Natural killer cell (primary cell): ENCODE measurements at regions of chr15 and their contacts with region 1.

Region 1: DNA sequence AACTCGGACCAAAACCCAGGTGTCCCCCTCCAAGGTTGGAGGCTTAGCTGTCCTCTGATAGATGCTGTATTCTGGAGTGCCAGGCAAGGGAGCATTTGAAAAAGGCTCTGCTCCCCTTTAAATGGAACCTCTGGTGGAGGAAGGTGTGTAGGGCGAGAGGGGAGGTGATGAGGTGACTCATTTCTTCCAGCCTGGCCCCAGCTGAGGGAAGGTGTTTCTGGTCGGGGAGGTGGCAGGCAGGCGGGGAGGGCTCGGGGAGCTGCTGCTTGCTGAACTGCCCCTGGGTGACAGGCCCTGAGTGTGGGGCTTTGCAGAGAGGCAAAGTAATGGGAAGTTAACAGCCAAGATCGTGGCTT is 18.8 kb downstream of the PSTPIP1 start:
- DNase-seq: peak; percentile 78 to 88
- ATAC-seq: peak; percentile 68 to 80 (median 73)
- H3K4me3 ChIP-seq: peak overlapping the region; percentile 5
- H3K4me3 Mint-ChIP-seq: peak overlapping the region; percentile 90
- H3K27ac ChIP-seq: peak overlapping the region; percentile 84
- H3K27ac Mint-ChIP-seq: peak overlapping the region; percentile 96 to 99
- H3K4me1 ChIP-seq: peaks cover 99% of the 10 kb centered on the region
- H3K4me1 Mint-ChIP-seq: peaks cover 74 to 98% of the 10 kb centered on the region in 2 donors
- H3K27me3 ChIP-seq: no peaks in the 10 kb centered on the region
- H3K27me3 Mint-ChIP-seq: no peaks in the 10 kb centered on the region
- CTCF ChIP-seq: no peak

Region 2: GRCh38 chr15:76931397-76932007 is 82.3 kb before region 1 on chr15 and contains the start of gene RCN2:
- intact Hi-C with region 1: loop called (anchors 5 kb)
- DNase-seq: peak; percentile 96 to 97
- ATAC-seq: peak; percentile 96 to 100 (median 98)
- H3K4me3 ChIP-seq: peak within 1 kb of the TSS; percentile 62
- H3K4me3 Mint-ChIP-seq: peak within 1 kb of the TSS; percentile 91
- H3K27ac ChIP-seq: peak within 1 kb of the TSS; percentile 72
- H3K27ac Mint-ChIP-seq: peak within 1 kb of the TSS; percentile 86
- H3K4me1 ChIP-seq: peaks cover 5% of the 10 kb centered on the region
- H3K4me1 Mint-ChIP-seq: peaks cover 20 to 29% of the 10 kb centered on the region in 2 donors
- H3K27me3 ChIP-seq: no peaks in the 10 kb centered on the region
- H3K27me3 Mint-ChIP-seq: peaks cover 0 to 2% of the 10 kb centered on the region in 2 donors
- CTCF ChIP-seq: no peak
- total RNA-seq, gene RCN2: 24.1 to 30.0 (median 25.0) TPM

Region 3: GRCh38 chr15:76996526-76997401 is 17.0 kb before region 1 on chr15:
- intact Hi-C with region 1: loop called (anchors 2 kb)
- DNase-seq: peak in 1 of 2 donors; percentile 69
- ATAC-seq: peak; percentile 31 to 50 (median 40)
- H3K4me3 ChIP-seq: peak overlapping the region; percentile 81
- H3K4me3 Mint-ChIP-seq: peak overlapping the region; percentile 96
- H3K27ac ChIP-seq: peak overlapping the region; percentile 86
- H3K27ac Mint-ChIP-seq: peak overlapping the region; percentile 92 to 95
- H3K4me1 ChIP-seq: peaks cover 93% of the 10 kb centered on the region
- H3K4me1 Mint-ChIP-seq: peaks cover 72 to 88% of the 10 kb centered on the region in 2 donors
- H3K27me3 ChIP-seq: no peaks in the 10 kb centered on the region
- H3K27me3 Mint-ChIP-seq: no peaks in the 10 kb centered on the region
- CTCF ChIP-seq: no peak

Region 4: GRCh38 chr15:77002954-77003912 is 10.5 kb before region 1 on chr15:
- intact Hi-C with region 1: loop called (anchors 1 kb)
- DNase-seq: peak; percentile 44 to 87
- ATAC-seq: peak; percentile 51 to 82 (median 78)
- H3K4me3 ChIP-seq: no peak overlapping the region
- H3K4me3 Mint-ChIP-seq: peak overlapping the region; percentile 82
- H3K27ac ChIP-seq: peak overlapping the region; percentile 83
- H3K27ac Mint-ChIP-seq: peak overlapping the region; percentile 92 to 95
- H3K4me1 ChIP-seq: peaks cover 86% of the 10 kb centered on the region
- H3K4me1 Mint-ChIP-seq: peaks cover 84% of the 10 kb centered on the region in 2 donors
- H3K27me3 ChIP-seq: no peaks in the 10 kb centered on the region
- H3K27me3 Mint-ChIP-seq: no peaks in the 10 kb centered on the region
- CTCF ChIP-seq: no peak

Region 5: GRCh38 chr15:77107531-77108355 is 94.0 kb after region 1 on chr15:
- intact Hi-C with region 1: no loop called
- DNase-seq: peak in 1 of 2 donors; percentile 57
- ATAC-seq: peak; percentile 39 to 62 (median 52)
- H3K4me3 ChIP-seq: no peak overlapping the region
- H3K4me3 Mint-ChIP-seq: no peak overlapping the region
- H3K27ac ChIP-seq: no peak overlapping the region
- H3K27ac Mint-ChIP-seq: no peak overlapping the region
- H3K4me1 ChIP-seq: no peaks in the 10 kb centered on the region
- H3K4me1 Mint-ChIP-seq: peaks cover 0 to 6% of the 10 kb centered on the region in 2 donors
- H3K27me3 ChIP-seq: no peaks in the 10 kb centered on the region
- H3K27me3 Mint-ChIP-seq: no peaks in the 10 kb centered on the region
- CTCF ChIP-seq: peak; percentile 56

Region 6: GRCh38 chr15:77179541-77179998 is 165.8 kb after region 1 on chr15:
- intact Hi-C with region 1: loop called (anchors 5 kb)
- DNase-seq: peak; percentile 26 to 50
- ATAC-seq: peak; percentile 59 to 74 (median 73)
- H3K4me3 ChIP-seq: no peak overlapping the region
- H3K4me3 Mint-ChIP-seq: peak overlapping the region; percentile 79
- H3K27ac ChIP-seq: peak overlapping the region; percentile 75
- H3K27ac Mint-ChIP-seq: peak overlapping the region; percentile 86 to 89
- H3K4me1 ChIP-seq: peaks cover 41% of the 10 kb centered on the region
- H3K4me1 Mint-ChIP-seq: peaks cover 48 to 51% of the 10 kb centered on the region in 2 donors
- H3K27me3 ChIP-seq: no peaks in the 10 kb centered on the region
- H3K27me3 Mint-ChIP-seq: no peaks in the 10 kb centered on the region
- CTCF ChIP-seq: no peak